PC-3 (cell line): ENCODE measurements at regions of chr6 and their contacts with region 1.

Region 1: GRCh38 chr6:85449818-85450759 is at the start of gene NT5E:
- DNase-seq: peak; percentile 65
- ATAC-seq: peak; percentile 79
- H3K4me3 ChIP-seq: peak within 1 kb of the TSS; percentile 87
- H3K27ac ChIP-seq: peak within 1 kb of the TSS; percentile 66
- H3K4me1 ChIP-seq: peaks cover 29% of the 10 kb centered on the region
- H3K27me3 ChIP-seq: no peaks in the 10 kb centered on the region
- CTCF ChIP-seq: peak; percentile 31; the same call in 1 of the 2 replicates
- total RNA-seq, gene NT5E: 9.0 and 15.8 TPM in 2 replicates

Region 2: DNA sequence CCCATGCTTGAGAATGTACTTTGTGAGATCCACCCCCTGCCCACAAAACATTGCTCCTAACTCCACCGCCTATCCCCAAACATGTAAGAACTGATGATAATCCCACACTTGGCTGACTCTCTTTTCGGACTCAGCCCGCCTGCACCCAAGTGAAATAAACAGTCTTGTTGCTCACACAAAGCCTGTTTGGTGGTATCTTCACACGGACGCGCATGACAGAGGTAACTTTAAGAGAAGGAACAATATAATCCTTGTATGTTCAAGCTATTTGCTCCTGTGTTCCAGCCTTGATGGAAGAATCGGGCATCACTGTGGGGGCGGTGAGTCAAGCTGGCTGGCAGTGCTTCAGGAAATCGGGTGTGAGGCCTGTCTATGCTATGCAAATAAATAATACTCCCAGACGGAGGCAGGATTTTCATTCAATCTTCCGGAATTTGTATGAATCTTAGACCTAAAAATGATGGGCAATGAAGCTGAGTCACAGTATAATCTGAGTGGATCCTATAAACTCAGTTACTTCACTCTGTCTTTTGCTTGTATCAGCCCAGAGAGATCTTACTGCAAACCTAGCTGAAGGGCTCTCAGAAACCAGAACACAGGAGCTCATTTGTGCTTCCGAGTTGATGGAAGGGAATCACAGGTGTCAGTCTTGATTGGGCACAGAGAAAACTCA is 45.5 kb before region 1 on chr6:
- CTCF ChIA-PET with region 1: interaction called, 8 read pairs
- POLR2A ChIA-PET with region 1: interaction called, 15 read pairs
- intact Hi-C with region 1: loop called (anchors 2 kb)
- DNase-seq: peak; percentile 94
- ATAC-seq: peak; percentile 74
- H3K4me3 ChIP-seq: peak overlapping the region; percentile 45; the same call in 1 of the 2 replicates
- H3K27ac ChIP-seq: peak overlapping the region; percentile 95
- H3K4me1 ChIP-seq: peaks cover 48% of the 10 kb centered on the region
- H3K27me3 ChIP-seq: no peaks in the 10 kb centered on the region
- CTCF ChIP-seq: no peak

Region 3: DNA sequence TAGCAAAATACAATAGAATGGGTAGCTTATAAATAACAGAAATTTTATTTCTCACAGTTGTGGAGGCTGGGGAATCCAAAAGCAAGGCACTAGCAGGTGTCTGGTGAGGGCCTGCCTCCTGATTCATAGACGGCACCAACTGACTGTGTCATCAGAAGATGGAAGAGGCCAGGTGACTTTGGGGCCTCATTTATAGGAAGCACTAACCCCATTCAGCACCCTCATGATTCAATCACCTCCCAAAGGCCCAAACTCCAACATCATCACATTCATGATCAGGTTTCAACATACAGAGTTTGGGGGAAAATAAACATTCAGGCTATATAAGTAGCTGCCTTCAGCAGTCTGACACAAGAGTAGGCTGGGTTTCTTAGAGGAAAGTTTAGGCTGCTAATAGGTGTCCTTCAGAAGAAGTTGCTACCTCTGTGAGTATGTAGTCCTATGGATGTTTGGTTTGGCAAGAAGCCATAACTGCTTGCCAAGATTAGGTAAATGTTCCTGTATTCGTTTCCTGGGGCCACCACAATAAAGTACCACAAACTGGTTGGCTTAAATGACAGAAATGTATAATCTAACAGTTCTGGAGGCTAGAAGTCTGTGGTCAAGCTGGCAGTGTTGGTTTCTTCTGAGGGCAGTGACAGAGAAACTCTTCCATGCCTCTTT is 48.6 kb after region 1 on chr6:
- CTCF ChIA-PET with region 1: no interaction called
- POLR2A ChIA-PET with region 1: interaction called, 16 read pairs
- intact Hi-C with region 1: no loop called
- DNase-seq: peak; percentile 91
- ATAC-seq: peak; percentile 85
- H3K4me3 ChIP-seq: no peak overlapping the region
- H3K27ac ChIP-seq: no peak overlapping the region
- H3K4me1 ChIP-seq: peaks cover 17% of the 10 kb centered on the region
- H3K27me3 ChIP-seq: no peaks in the 10 kb centered on the region
- CTCF ChIP-seq: no peak